K562 (cell line): ENCODE measurements at regions of chr7 and their contacts with region 1.

Region 1: GRCh38 chr7:153381275-153382040 is 621.9 kb downstream of the ACTR3B start:
- DNase-seq: peak; percentile 78 to 85 (median 82)
- ATAC-seq: peak; percentile 94
- H3K4me3 ChIP-seq: no peak overlapping the region
- H3K27ac ChIP-seq: no peak overlapping the region
- H3K4me1 ChIP-seq: peaks cover 0 to 9% of the 10 kb centered on the region in 2 experiments; a peak in 3 of 5 replicates
- H3K27me3 ChIP-seq: no peaks in the 10 kb centered on the region
- CTCF ChIP-seq: peak; percentile 86 to 99 (median 95)
- EP300 ChIP-seq: no peak
- POLR2A ChIP-seq: no peak
- RAD21 ChIP-seq: peak; percentile 91 to 94

Region 2: GRCh38 chr7:153682628-153683027 is 301.2 kb after region 1 on chr7:
- CTCF ChIA-PET with region 1: interaction called, 3 read pairs
- POLR2A ChIA-PET with region 1: no interaction called
- in situ Hi-C with region 1: no loop called
- intact Hi-C with region 1: loop called (anchors 5 kb)
- DNase-seq: peak in 1 of 4 experiments; percentile 14
- ATAC-seq: peak; percentile 53; the same call in 2 of the 3 replicates
- H3K4me3 ChIP-seq: no peak overlapping the region
- H3K27ac ChIP-seq: no peak overlapping the region
- H3K4me1 ChIP-seq: no peaks in the 10 kb centered on the region
- H3K27me3 ChIP-seq: no peaks in the 10 kb centered on the region
- CTCF ChIP-seq: peak in 2 of 3 experiments; percentile 31 to 48; a peak in 3 of 6 replicates
- EP300 ChIP-seq: no peak
- POLR2A ChIP-seq: no peak
- RAD21 ChIP-seq: peak; percentile 35 to 49; a peak in 3 of 4 replicates

Region 3: GRCh38 chr7:153698046-153698445 is 316.6 kb after region 1 on chr7:
- CTCF ChIA-PET with region 1: no interaction called
- POLR2A ChIA-PET with region 1: no interaction called
- in situ Hi-C with region 1: no loop called
- intact Hi-C with region 1: loop called (anchors 5 kb)
- DNase-seq: no peak
- ATAC-seq: no peak
- H3K4me3 ChIP-seq: no peak overlapping the region
- H3K27ac ChIP-seq: no peak overlapping the region
- H3K4me1 ChIP-seq: no peaks in the 10 kb centered on the region
- H3K27me3 ChIP-seq: peaks cover 0 to 11% of the 10 kb centered on the region in 2 experiments; a peak in 1 of 5 replicates
- CTCF ChIP-seq: no peak
- EP300 ChIP-seq: no peak
- POLR2A ChIP-seq: no peak
- RAD21 ChIP-seq: no peak

Region 4: GRCh38 chr7:153835104-153835503 is 453.6 kb after region 1 on chr7:
- CTCF ChIA-PET with region 1: interaction called, 10 read pairs
- POLR2A ChIA-PET with region 1: no interaction called
- in situ Hi-C with region 1: no loop called
- intact Hi-C with region 1: loop called (anchors 1 kb)
- DNase-seq: peak in 1 of 4 experiments; percentile 5
- ATAC-seq: peak; percentile 60; the same call in 1 of the 3 replicates
- H3K4me3 ChIP-seq: no peak overlapping the region
- H3K27ac ChIP-seq: no peak overlapping the region
- H3K4me1 ChIP-seq: no peaks in the 10 kb centered on the region
- H3K27me3 ChIP-seq: no peaks in the 10 kb centered on the region
- CTCF ChIP-seq: peak in 1 of 3 experiments; percentile 43; a peak in 2 of 6 replicates
- EP300 ChIP-seq: no peak
- POLR2A ChIP-seq: no peak
- RAD21 ChIP-seq: peak; percentile 34 to 42